Activated naive CD4-positive, alpha-beta T cell treated with anti-CD3 and anti-CD28 coated beads for 36 hours (primary cell): ENCODE measurements at regions of chr7 and their contacts with region 1.

Region 1: GRCh38 chr7:74449809-74450397 is 3.8 kb upstream of the GTF2IRD1 start:
- DNase-seq: peak; percentile 81
- H3K4me3 Mint-ChIP-seq: no peak overlapping the region
- H3K27ac Mint-ChIP-seq: no peak overlapping the region
- H3K4me1 Mint-ChIP-seq: peaks cover 12% of the 10 kb centered on the region
- H3K27me3 Mint-ChIP-seq: no peaks in the 10 kb centered on the region

Region 2: DNA sequence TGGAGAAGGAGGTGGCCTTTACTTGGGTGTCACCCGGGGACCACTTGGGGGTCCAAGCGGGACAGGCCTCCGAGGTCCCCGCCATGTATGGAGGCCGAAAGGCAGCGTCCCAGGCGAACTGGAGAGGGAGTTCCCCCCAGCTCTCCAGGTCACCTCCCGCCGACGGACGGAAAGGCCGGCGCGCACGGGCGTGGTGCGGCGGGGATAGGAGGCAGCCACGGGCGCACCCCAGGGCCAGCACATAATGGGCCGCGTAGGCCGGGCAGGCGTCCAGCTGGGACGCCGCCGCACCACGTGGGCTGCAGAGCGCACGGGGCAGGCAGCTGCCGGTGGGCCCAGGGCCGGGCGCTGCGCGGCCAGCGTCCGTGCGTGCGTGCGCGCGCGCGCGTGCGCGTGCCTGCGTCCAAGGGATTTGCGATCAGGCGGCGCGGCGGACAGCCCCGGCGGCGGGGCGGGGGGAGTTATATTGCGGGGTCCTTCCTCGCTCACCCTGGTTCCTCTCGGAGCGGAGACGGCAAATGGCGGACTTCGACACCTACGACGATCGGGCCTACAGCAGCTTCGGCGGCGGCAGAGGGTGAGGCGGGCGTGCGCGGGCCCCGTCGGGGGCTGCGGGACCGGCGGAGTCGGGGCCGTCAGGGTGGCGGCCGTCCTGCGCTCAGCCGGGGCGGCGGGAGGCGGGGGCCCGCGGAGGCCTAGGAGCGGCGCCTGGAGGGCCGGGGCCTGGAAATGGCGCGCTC is 275.9 kb before region 1 on chr7 and contains the start of gene EIF4H:
- CTCF ChIA-PET with region 1: no interaction called
- intact Hi-C with region 1: loop called (anchors 5 kb)
- DNase-seq: peak; percentile 95
- H3K4me3 Mint-ChIP-seq: peak within 1 kb of the TSS; percentile 87
- H3K27ac Mint-ChIP-seq: peak within 1 kb of the TSS; percentile 88
- H3K4me1 Mint-ChIP-seq: peaks cover 39% of the 10 kb centered on the region
- H3K27me3 Mint-ChIP-seq: no peaks in the 10 kb centered on the region
- total RNA-seq, gene EIF4H: 492 to 518 TPM

Region 3: GRCh38 chr7:74343281-74344127 is 106.4 kb before region 1 on chr7:
- CTCF ChIA-PET with region 1: no interaction called
- intact Hi-C with region 1: no loop called
- DNase-seq: peak; percentile 12
- H3K4me3 Mint-ChIP-seq: no peak overlapping the region
- H3K27ac Mint-ChIP-seq: no peak overlapping the region
- H3K4me1 Mint-ChIP-seq: no peaks in the 10 kb centered on the region
- H3K27me3 Mint-ChIP-seq: no peaks in the 10 kb centered on the region

Region 4: DNA sequence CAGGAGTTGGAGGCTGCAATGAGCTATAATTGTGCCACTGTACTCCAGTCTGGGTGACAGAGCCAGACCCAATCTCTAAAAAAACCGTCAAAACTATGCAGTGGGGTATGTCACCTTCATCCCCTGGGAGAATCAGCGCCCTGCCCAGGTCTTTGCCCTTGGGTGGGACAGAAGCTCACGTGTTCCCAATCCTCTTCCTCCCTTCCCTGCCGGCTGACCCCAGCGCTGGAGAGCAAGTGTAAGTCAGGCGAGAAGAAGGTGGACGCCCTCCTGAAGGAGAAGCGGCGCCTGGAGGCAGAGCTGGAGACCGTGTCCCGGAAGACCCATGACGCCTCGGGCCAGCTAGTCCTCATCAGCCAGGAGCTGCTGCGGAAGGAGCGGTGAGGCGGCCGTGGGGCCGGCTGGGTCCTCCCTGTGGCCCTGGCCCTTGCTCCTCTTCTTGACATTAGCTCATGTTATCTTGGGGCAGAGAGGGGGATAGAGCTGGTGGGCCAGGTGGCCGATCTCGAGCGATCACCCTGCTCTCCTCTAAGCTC is 61.0 kb before region 1 on chr7:
- CTCF ChIA-PET with region 1: no interaction called
- intact Hi-C with region 1: no loop called
- DNase-seq: no peak
- H3K4me3 Mint-ChIP-seq: no peak overlapping the region
- H3K27ac Mint-ChIP-seq: no peak overlapping the region
- H3K4me1 Mint-ChIP-seq: no peaks in the 10 kb centered on the region
- H3K27me3 Mint-ChIP-seq: no peaks in the 10 kb centered on the region

Region 5: GRCh38 chr7:74544706-74545469 is 95.0 kb after region 1 on chr7:
- CTCF ChIA-PET with region 1: interaction called, 7 read pairs
- intact Hi-C with region 1: loop called (anchors 1 kb)
- DNase-seq: peak; percentile 54
- H3K4me3 Mint-ChIP-seq: no peak overlapping the region
- H3K27ac Mint-ChIP-seq: no peak overlapping the region
- H3K4me1 Mint-ChIP-seq: no peaks in the 10 kb centered on the region
- H3K27me3 Mint-ChIP-seq: no peaks in the 10 kb centered on the region

Region 6: DNA sequence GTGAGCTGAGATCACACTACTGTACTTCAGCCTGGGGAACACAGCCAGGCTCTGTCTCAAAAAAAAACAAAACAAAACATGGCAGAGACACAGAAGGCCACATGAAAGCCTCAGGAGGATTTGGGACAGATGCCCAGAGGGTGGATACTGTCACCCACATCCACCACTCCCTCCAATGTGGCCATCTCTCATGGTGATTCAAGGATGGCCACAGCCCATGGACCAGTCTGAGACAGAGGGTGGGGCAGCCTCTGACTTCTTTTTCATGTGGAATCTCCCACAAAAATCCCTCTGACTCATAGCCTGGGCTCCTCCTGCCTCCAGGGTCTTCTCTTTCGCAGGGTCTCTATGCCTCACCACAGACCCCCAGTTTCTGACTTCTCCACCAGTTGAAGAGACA is 148.7 kb after region 1 on chr7:
- CTCF ChIA-PET with region 1: no interaction called
- intact Hi-C with region 1: loop called (anchors 5 kb)
- DNase-seq: no peak
- H3K4me3 Mint-ChIP-seq: no peak overlapping the region
- H3K27ac Mint-ChIP-seq: no peak overlapping the region
- H3K4me1 Mint-ChIP-seq: peaks cover 10% of the 10 kb centered on the region
- H3K27me3 Mint-ChIP-seq: no peaks in the 10 kb centered on the region